ENCODE measurements at regions of chr11 and their contacts with region 1.

Region 1: GRCh38 chr11:11036848-11037732 is 179.2 kb upstream of the ZBED5 start:
- DNase-seq: peak; percentile 50 to 59 (median 57)
- H3K4me3 ChIP-seq: no peak overlapping the region
- H3K4me3 Mint-ChIP-seq: no peak overlapping the region
- H3K27ac ChIP-seq: no peak overlapping the region
- H3K27ac Mint-ChIP-seq: peak overlapping the region in 3 of 7 donors; percentile 29 to 77 (median 56)
- H3K4me1 ChIP-seq: no peaks in the 10 kb centered on the region
- H3K4me1 Mint-ChIP-seq: peaks cover 5 to 8% (median 6%) of the 10 kb centered on the region in 4 donors
- H3K27me3 ChIP-seq: peaks cover 4% of the 10 kb centered on the region
- H3K27me3 Mint-ChIP-seq: no peaks in the 10 kb centered on the region

Region 2: DNA sequence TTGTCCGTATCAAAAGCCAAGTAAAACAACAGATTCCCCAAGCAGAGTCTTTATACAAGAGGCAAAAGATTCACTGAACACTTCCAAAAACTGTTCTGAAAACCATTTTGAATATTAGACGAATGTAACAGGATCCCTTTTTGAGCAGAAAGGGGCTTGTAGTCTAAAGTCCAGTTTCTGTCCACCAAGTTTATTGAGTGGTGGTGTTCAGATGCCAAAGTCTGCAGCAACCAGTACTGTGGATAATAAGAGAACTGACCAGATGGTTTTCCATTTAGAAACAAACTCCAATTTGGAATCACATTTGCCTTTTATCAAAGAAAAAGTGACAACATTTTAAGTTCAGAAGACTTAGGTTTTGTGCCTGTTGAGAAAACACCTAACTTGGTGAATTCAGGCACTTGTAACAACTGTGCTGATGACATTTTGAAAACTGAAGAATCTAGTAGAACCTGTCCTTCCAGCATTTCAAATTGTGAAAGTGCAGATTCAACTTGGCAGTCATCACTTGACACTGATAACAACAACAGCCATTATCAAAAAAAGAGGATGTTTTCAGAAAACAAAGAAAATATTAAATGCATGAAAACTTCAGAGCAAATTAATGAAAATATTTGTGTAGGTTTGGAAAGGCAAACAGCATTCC is 98.9 kb after region 1 on chr11:
- CTCF ChIA-PET with region 1: interaction called, 10 read pairs
- POLR2A ChIA-PET with region 1: no interaction called
- intact Hi-C with region 1: no loop called
- DNase-seq: no peak
- H3K4me3 ChIP-seq: no peak overlapping the region
- H3K4me3 Mint-ChIP-seq: peak overlapping the region in 1 of 8 donors; percentile 40
- H3K27ac ChIP-seq: no peak overlapping the region
- H3K27ac Mint-ChIP-seq: peak overlapping the region in 1 of 7 donors; percentile 42
- H3K4me1 ChIP-seq: peaks cover 14% of the 10 kb centered on the region
- H3K4me1 Mint-ChIP-seq: peaks cover 13 to 22% (median 18%) of the 10 kb centered on the region in 4 donors
- H3K27me3 ChIP-seq: no peaks in the 10 kb centered on the region
- H3K27me3 Mint-ChIP-seq: peaks cover 1 to 6% of the 10 kb centered on the region in 2 donors

Region 3: DNA sequence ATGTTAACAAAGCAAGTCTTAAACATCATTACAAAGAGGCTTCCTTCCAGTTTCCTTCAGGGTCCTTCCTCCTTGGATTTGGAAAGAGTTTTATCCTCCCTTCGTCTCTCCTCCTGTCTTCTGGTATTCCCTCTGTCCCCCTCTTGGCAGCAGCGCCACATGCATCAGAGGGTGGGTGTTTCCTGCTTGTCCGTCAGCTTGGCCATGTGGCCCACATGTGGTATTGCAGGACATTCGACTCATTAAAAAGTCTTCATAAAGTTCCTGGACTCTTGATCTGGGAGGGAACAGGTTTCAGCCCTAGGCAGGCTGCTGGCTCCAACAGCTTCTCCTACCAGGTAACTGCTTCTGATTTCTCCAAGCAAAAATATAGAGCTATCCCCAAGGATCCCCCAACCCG is 126.1 kb after region 1 on chr11:
- CTCF ChIA-PET with region 1: interaction called, 339 read pairs
- POLR2A ChIA-PET with region 1: interaction called, 20 read pairs
- intact Hi-C with region 1: no loop called
- DNase-seq: no peak
- H3K4me3 ChIP-seq: no peak overlapping the region
- H3K4me3 Mint-ChIP-seq: no peak overlapping the region
- H3K27ac ChIP-seq: no peak overlapping the region
- H3K27ac Mint-ChIP-seq: peak overlapping the region in 1 of 7 donors; percentile 30
- H3K4me1 ChIP-seq: no peaks in the 10 kb centered on the region
- H3K4me1 Mint-ChIP-seq: no peaks in the 10 kb centered on the region
- H3K27me3 ChIP-seq: no peaks in the 10 kb centered on the region
- H3K27me3 Mint-ChIP-seq: peaks cover 2 to 4% of the 10 kb centered on the region in 2 donors

Region 4: GRCh38 chr11:11207428-11207827 is 170.3 kb after region 1 on chr11:
- CTCF ChIA-PET with region 1: interaction called, 5 read pairs
- POLR2A ChIA-PET with region 1: no interaction called
- intact Hi-C with region 1: loop called (anchors 2 kb)
- DNase-seq: no peak
- H3K4me3 ChIP-seq: no peak overlapping the region
- H3K4me3 Mint-ChIP-seq: no peak overlapping the region
- H3K27ac ChIP-seq: no peak overlapping the region
- H3K27ac Mint-ChIP-seq: no peak overlapping the region
- H3K4me1 ChIP-seq: no peaks in the 10 kb centered on the region
- H3K4me1 Mint-ChIP-seq: no peaks in the 10 kb centered on the region
- H3K27me3 ChIP-seq: no peaks in the 10 kb centered on the region
- H3K27me3 Mint-ChIP-seq: peaks cover 12 to 23% of the 10 kb centered on the region in 2 donors

Region 5: DNA sequence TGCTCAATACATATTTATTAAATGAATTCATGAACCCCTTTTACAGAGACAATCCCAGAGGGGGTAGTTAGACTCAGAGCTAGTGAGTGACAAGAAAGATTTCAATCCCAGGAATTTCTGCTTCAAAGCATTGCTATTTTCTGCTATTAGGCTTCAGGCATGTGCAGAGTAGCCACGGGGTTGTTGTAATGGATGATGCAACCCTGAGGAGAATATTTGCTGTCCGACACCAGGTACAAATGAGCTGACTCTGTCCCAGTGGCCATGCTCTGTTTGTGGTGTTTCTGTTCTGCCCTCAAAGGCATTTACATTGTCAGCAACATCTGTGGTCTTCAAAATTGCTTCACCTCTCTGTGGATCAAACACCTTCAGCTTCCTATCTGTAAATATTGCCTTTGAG is 213.4 kb after region 1 on chr11:
- CTCF ChIA-PET with region 1: no interaction called
- POLR2A ChIA-PET with region 1: no interaction called
- intact Hi-C with region 1: no loop called
- DNase-seq: no peak
- H3K4me3 ChIP-seq: no peak overlapping the region
- H3K4me3 Mint-ChIP-seq: no peak overlapping the region
- H3K27ac ChIP-seq: no peak overlapping the region
- H3K27ac Mint-ChIP-seq: no peak overlapping the region
- H3K4me1 ChIP-seq: no peaks in the 10 kb centered on the region
- H3K4me1 Mint-ChIP-seq: peaks cover 0 to 13% (median under 1%) of the 10 kb centered on the region in 4 donors
- H3K27me3 ChIP-seq: no peaks in the 10 kb centered on the region
- H3K27me3 Mint-ChIP-seq: peaks cover 2 to 5% of the 10 kb centered on the region in 2 donors

Region 6: GRCh38 chr11:11265994-11266606 is 229.0 kb after region 1 on chr11:
- CTCF ChIA-PET with region 1: interaction called, 39 read pairs
- POLR2A ChIA-PET with region 1: no interaction called
- intact Hi-C with region 1: loop called (anchors 1 kb)
- DNase-seq: peak in 4 of 5 donors; percentile 30 to 51 (median 46)
- H3K4me3 ChIP-seq: no peak overlapping the region
- H3K4me3 Mint-ChIP-seq: no peak overlapping the region
- H3K27ac ChIP-seq: no peak overlapping the region
- H3K27ac Mint-ChIP-seq: no peak overlapping the region
- H3K4me1 ChIP-seq: no peaks in the 10 kb centered on the region
- H3K4me1 Mint-ChIP-seq: peaks cover 0 to 3% (median 0%) of the 10 kb centered on the region in 4 donors
- H3K27me3 ChIP-seq: no peaks in the 10 kb centered on the region
- H3K27me3 Mint-ChIP-seq: peaks cover 0 to 3% of the 10 kb centered on the region in 2 donors

Region 7: GRCh38 chr11:11787305-11788062 is 750.4 kb after region 1 on chr11:
- CTCF ChIA-PET with region 1: interaction called, 39 read pairs
- POLR2A ChIA-PET with region 1: no interaction called
- intact Hi-C with region 1: loop called (anchors 2 kb)
- DNase-seq: peak; percentile 59 to 67 (median 61)
- H3K4me3 ChIP-seq: no peak overlapping the region
- H3K4me3 Mint-ChIP-seq: no peak overlapping the region
- H3K27ac ChIP-seq: no peak overlapping the region
- H3K27ac Mint-ChIP-seq: no peak overlapping the region
- H3K4me1 ChIP-seq: no peaks in the 10 kb centered on the region
- H3K4me1 Mint-ChIP-seq: peaks cover 0 to 1% (median 0%) of the 10 kb centered on the region in 4 donors
- H3K27me3 ChIP-seq: no peaks in the 10 kb centered on the region
- H3K27me3 Mint-ChIP-seq: peaks cover 0 to 7% of the 10 kb centered on the region in 2 donors

Measured in CD4-positive, alpha-beta memory T cell (primary cell).